SK-N-SH (cell line): ENCODE measurements at regions of chr20 and their contacts with region 1.

Region 1: DNA sequence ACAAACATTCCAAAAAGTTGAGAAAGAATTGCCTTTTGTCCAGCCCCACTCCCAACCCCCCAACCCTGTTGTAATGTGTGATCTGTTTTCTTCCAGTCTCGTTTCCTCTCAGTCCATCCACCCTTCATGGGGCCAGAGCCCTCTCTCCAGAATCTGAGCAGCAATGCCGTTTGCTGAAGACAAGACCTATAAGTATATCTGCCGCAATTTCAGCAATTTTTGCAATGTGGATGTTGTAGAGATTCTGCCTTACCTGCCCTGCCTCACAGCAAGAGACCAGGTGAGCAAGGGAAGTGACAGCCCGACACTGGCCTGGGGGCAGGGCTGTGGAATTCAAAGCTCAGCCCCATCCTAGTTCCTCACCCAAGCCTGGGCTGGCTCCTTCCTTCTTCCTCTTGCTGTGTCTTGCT is 7.8 kb downstream of the MAVS start:
- DNase-seq: no peak
- H3K4me3 ChIP-seq: no peak overlapping the region
- H3K27ac ChIP-seq: no peak overlapping the region
- H3K4me1 ChIP-seq: no peaks in the 10 kb centered on the region
- H3K27me3 ChIP-seq: no peaks in the 10 kb centered on the region
- CTCF ChIP-seq: no peak
- EP300 ChIP-seq: no peak
- RAD21 ChIP-seq: no peak

Region 2: DNA sequence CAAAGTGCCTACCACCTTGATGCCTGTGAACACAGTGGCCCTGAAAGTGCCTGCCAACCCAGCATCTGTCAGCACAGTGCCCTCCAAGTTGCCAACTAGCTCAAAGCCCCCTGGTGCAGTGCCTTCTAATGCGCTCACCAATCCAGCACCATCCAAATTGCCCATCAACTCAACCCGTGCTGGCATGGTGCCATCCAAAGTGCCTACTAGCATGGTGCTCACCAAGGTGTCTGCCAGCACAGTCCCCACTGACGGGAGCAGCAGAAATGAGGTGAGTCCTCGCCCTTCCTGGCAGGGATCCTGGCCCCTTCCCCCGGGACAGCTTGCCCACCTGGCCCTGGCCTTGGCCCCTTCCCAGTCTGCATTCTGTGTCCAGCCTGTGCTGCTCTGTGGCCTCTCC is 10.1 kb after region 1 on chr20:
- CTCF ChIA-PET with region 1: interaction called, 16 read pairs
- POLR2A ChIA-PET with region 1: no interaction called
- DNase-seq: no peak
- H3K4me3 ChIP-seq: no peak overlapping the region
- H3K27ac ChIP-seq: no peak overlapping the region
- H3K4me1 ChIP-seq: no peaks in the 10 kb centered on the region; a peak in 1 of 4 replicates
- H3K27me3 ChIP-seq: no peaks in the 10 kb centered on the region
- CTCF ChIP-seq: no peak
- EP300 ChIP-seq: no peak
- RAD21 ChIP-seq: no peak

Region 3: DNA sequence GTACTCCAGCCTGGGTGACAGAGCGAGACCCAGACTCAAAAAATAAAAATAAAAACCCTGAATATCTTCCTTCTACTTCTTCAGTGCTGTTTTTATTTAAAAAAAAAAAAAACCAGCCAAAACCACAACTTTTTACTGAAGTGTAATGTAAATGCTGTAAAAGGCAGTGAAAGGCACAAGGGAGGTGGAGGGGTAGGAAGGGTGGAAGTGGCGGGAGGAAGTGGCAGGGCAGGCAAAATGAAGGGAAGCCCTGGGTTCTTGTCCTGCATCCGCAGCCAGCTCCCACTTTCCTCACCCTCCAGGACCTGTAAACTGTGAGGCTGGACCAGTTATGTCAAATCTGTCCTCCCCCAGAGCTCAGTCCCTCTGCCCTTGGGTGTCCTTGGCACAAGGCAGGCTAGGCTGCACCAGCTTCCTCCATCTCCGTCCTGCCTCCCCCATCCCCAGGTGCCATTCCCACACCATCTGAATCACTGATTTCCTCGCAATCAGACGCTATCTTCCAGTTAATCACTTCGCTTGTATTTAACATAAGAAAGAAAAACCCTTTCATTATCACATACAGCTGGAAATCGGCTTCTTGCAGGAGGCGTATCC is 21.0 kb after region 1 on chr20:
- CTCF ChIA-PET with region 1: interaction called, 14 read pairs
- POLR2A ChIA-PET with region 1: no interaction called
- DNase-seq: no peak
- H3K4me3 ChIP-seq: no peak overlapping the region
- H3K27ac ChIP-seq: no peak overlapping the region
- H3K4me1 ChIP-seq: peaks cover 0 to 2% of the 10 kb centered on the region in 2 experiments; a peak in 1 of 4 replicates
- H3K27me3 ChIP-seq: no peaks in the 10 kb centered on the region
- CTCF ChIP-seq: no peak
- EP300 ChIP-seq: no peak
- RAD21 ChIP-seq: no peak

Region 4: GRCh38 chr20:4261333-4262217 is 407.1 kb after region 1 on chr20:
- CTCF ChIA-PET with region 1: no interaction called
- POLR2A ChIA-PET with region 1: no interaction called
- DNase-seq: no peak
- H3K4me3 ChIP-seq: no peak overlapping the region
- H3K27ac ChIP-seq: no peak overlapping the region
- H3K4me1 ChIP-seq: peaks cover 0 to 5% of the 10 kb centered on the region in 2 experiments; a peak in 1 of 4 replicates
- H3K27me3 ChIP-seq: no peaks in the 10 kb centered on the region
- CTCF ChIP-seq: peak; percentile 19; the same call in 1 of the 2 replicates
- EP300 ChIP-seq: no peak
- RAD21 ChIP-seq: no peak